Heart right ventricle (tissue), 16 donors: ENCODE measurements at regions of chr1 and their contacts with region 1.

Region 1: DNA sequence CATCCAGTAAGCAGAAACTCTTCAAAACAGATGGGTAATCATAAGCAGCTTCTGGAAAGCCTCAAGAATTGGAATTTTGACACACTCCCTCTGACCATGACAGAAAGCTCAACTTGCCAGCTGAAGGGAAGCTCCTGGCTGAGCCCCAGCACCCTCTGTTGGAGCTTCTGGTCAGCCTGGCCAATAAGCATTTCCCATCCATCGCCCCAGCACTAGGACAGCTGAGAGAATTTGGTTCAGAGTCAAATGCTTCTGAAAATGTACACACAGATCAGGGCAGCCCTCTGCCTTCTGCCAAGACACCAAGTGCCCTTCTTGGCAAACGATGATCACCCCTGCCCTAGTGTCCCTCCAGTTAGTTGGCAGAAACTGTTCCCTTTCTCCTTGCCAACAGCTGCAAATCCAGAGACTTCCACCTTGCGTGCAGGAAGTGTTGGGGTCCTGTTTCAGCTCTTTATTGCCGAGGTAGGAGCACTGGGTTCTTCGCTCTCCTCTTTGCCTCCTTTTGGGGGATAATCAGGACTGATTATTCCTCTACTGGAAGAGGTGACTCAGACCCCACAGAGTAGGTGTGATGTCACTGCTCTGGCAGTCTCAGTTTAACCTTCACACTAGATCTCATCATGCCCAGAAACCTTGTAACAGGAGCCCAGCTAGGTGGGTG is 11.9 kb downstream of the PIGV start:
- DNase-seq: peak; percentile 73 to 74
- ATAC-seq: peak; percentile 75 to 95 (median 88)
- H3K4me3 ChIP-seq: peak overlapping the region in 1 of 10 donors; percentile 33
- H3K27ac ChIP-seq: peak overlapping the region; percentile 70 to 92 (median 86)
- H3K4me1 ChIP-seq: peaks cover 10 to 61% (median 51%) of the 10 kb centered on the region in 9 donors
- H3K27me3 ChIP-seq: no peaks in the 10 kb centered on the region
- CTCF ChIP-seq: no peak

Region 2: DNA sequence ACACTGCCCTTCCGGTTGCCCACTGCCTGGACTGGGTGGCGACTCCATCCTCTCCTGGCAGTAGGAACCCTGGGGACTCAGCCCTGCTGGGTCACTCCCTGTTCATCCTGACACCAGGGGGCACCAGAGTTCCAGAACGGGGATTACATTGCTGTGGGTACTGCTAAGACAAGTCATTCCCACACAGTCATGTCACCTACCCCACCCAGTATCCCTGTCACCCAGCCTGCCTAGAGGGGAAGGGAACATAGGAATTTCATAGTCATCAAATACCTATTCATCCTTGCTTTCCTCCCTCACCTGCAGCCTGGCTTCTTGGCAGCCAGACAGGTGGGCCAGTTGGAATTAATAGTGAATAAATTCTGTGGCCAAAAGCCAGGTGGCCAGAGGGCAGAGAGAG is 53.5 kb after region 1 on chr1:
- intact Hi-C with region 1: no loop called
- DNase-seq: peak; percentile 80 to 84
- ATAC-seq: peak; percentile 82 to 91 (median 86)
- H3K4me3 ChIP-seq: no peak overlapping the region
- H3K27ac ChIP-seq: no peak overlapping the region
- H3K4me1 ChIP-seq: peaks cover 0 to 5% (median 0%) of the 10 kb centered on the region in 9 donors
- H3K27me3 ChIP-seq: no peaks in the 10 kb centered on the region
- CTCF ChIP-seq: peak; percentile 54 to 88 (median 84)

Region 3: DNA sequence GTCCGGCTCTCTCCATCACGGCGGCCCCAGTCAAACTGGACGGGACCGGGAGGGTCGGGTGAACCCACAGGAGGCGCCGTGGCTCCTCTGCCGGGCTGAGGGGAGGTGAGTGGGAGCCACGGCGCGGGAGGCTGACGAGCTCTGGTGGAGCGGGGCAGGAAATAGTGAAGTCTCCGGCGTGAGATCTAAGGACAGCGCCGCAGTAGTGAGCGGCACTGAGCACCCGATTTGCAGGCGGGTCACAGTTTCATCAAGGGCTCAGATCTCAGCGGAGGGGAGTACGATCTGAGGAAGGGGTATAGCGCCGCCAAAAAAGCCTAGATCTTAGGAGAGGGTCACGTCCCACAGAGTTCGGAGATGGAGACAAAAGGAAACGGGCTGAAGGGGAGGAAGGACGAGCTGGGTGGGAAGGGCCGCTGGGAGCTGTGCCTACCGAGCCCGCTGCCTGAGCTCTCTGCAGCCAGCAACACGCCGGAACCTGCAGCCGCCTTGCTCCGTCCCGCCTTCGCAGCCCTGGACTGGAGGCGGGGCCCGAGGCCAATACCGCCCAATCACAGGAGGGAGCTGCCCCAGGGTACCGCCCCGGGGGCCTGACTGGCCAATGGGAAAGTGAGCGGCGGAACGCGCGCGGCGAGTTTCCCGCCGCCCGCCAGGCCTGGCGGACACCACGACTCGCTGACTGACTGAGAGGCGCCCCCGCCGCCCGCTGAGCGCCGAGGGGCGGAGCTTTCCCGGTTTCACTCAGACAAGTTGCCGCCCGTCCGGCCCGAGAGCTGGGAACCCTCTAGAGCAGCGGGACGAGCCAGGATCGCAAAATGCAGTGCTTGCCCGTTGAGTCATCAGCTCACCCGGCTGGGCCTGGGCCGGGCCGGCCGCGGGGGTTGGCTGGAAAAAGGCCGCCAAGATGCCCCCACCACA is 65.3 kb after region 1 on chr1:
- intact Hi-C with region 1: loop called in 1 of 10 experiments (anchors 2 kb)
- DNase-seq: peak; percentile 96 to 97
- ATAC-seq: peak; percentile 97 to 99 (median 99)
- H3K4me3 ChIP-seq: peak overlapping the region; percentile 47 to 78 (median 70)
- H3K27ac ChIP-seq: peak overlapping the region; percentile 82 to 99 (median 96)
- H3K4me1 ChIP-seq: peaks cover 0 to 22% (median 15%) of the 10 kb centered on the region in 9 donors
- H3K27me3 ChIP-seq: no peaks in the 10 kb centered on the region
- CTCF ChIP-seq: peak in 2 of 9 donors; percentile 13 to 14